IMR-90 (cell line): ENCODE measurements at regions of chr10 and their contacts with region 1.

Region 1: GRCh38 chr10:90148116-90148855 is 446.9 kb downstream of the KIF20B start:
- DNase-seq: peak; percentile 22
- ATAC-seq: peak; percentile 60; the same call in 1 of the 2 replicates
- H3K4me3 ChIP-seq: no peak overlapping the region
- H3K27ac ChIP-seq: no peak overlapping the region
- H3K4me1 ChIP-seq: no peaks in the 10 kb centered on the region
- H3K27me3 ChIP-seq: no peaks in the 10 kb centered on the region
- CTCF ChIP-seq: peak; percentile 47
- POLR2A ChIP-seq: no peak
- RAD21 ChIP-seq: peak; percentile 49

Region 2: DNA sequence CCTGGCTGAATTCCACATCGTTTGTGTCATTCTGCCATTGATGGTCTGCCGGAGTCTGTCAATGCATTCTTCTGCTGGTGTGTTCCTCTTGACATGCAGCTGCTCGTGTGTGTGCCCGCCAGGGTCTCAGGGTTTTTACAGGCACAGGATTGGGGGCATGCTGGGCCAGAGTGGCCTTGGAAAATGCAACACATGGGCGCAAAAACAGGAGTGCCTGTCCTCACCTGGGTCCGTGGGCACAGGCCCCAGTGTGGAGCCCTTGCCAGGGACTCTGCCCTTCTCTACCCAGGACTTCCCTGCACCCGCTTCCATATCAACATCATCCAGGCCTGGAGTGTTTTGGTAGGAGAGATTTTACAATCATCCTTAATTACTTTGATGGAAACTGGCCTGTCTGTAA is 106.2 kb before region 1 on chr10:
- CTCF ChIA-PET with region 1: no interaction called
- POLR2A ChIA-PET with region 1: no interaction called
- dilution Hi-C with region 1: no loop called
- in situ Hi-C with region 1: no loop called
- intact Hi-C with region 1: no loop called
- DNase-seq: no peak
- ATAC-seq: no peak
- H3K4me3 ChIP-seq: no peak overlapping the region
- H3K27ac ChIP-seq: no peak overlapping the region
- H3K4me1 ChIP-seq: no peaks in the 10 kb centered on the region
- H3K27me3 ChIP-seq: no peaks in the 10 kb centered on the region
- CTCF ChIP-seq: no peak
- POLR2A ChIP-seq: no peak
- RAD21 ChIP-seq: no peak

Region 3: GRCh38 chr10:90592638-90593302 is 444.5 kb after region 1 on chr10:
- CTCF ChIA-PET with region 1: interaction called, 4 read pairs
- POLR2A ChIA-PET with region 1: no interaction called
- dilution Hi-C with region 1: no loop called
- in situ Hi-C with region 1: no loop called
- intact Hi-C with region 1: loop called (anchors 1 kb)
- DNase-seq: peak; percentile 51
- ATAC-seq: peak; percentile 93
- H3K4me3 ChIP-seq: no peak overlapping the region
- H3K27ac ChIP-seq: no peak overlapping the region
- H3K4me1 ChIP-seq: no peaks in the 10 kb centered on the region
- H3K27me3 ChIP-seq: peaks cover 10% of the 10 kb centered on the region
- CTCF ChIP-seq: peak; percentile 64
- POLR2A ChIP-seq: no peak
- RAD21 ChIP-seq: peak; percentile 80

Region 4: DNA sequence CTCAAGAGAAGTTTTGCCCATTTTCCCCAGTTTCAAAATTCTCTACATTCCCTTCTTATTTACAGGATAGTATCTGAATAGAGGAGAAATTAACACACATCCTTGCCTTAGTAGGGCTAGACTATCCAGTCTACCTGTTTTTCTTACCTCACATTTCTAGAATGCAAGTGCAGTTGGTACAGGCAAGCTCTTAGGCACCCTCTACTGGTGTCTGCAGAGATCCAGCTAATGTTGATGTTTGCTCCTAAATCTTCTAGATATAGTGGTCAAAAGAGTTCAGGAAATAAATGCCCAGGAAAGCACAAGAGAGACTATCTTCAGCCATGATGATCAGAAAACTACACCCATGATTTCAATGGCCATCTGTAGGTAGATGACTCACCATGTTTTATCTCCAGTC is 504.2 kb after region 1 on chr10:
- CTCF ChIA-PET with region 1: interaction called, 3 read pairs
- POLR2A ChIA-PET with region 1: no interaction called
- dilution Hi-C with region 1: no loop called
- in situ Hi-C with region 1: no loop called
- intact Hi-C with region 1: loop called (anchors 2 kb)
- DNase-seq: peak; percentile 20
- ATAC-seq: no peak
- H3K4me3 ChIP-seq: no peak overlapping the region
- H3K27ac ChIP-seq: no peak overlapping the region
- H3K4me1 ChIP-seq: no peaks in the 10 kb centered on the region
- H3K27me3 ChIP-seq: no peaks in the 10 kb centered on the region
- CTCF ChIP-seq: peak; percentile 46
- POLR2A ChIP-seq: no peak
- RAD21 ChIP-seq: peak; percentile 51

Region 5: GRCh38 chr10:90862908-90863514 is 714.7 kb after region 1 on chr10:
- CTCF ChIA-PET with region 1: no interaction called
- POLR2A ChIA-PET with region 1: no interaction called
- dilution Hi-C with region 1: no loop called
- in situ Hi-C with region 1: no loop called
- intact Hi-C with region 1: loop called (anchors 5 kb)
- DNase-seq: peak; percentile 47
- ATAC-seq: peak; percentile 30; the same call in 1 of the 2 replicates
- H3K4me3 ChIP-seq: no peak overlapping the region
- H3K27ac ChIP-seq: no peak overlapping the region
- H3K4me1 ChIP-seq: no peaks in the 10 kb centered on the region
- H3K27me3 ChIP-seq: peaks cover 21% of the 10 kb centered on the region
- CTCF ChIP-seq: peak; percentile 89
- POLR2A ChIP-seq: no peak
- RAD21 ChIP-seq: peak; percentile 83